ENCODE measurements at regions of chr1 and their contacts with region 1.

Region 1: GRCh38 chr1:8314346-8315280 is 3.3 kb upstream of the SLC45A1 start:
- DNase-seq: peak; percentile 82
- H3K4me3 ChIP-seq: no peak overlapping the region
- H3K27ac ChIP-seq: no peak overlapping the region
- H3K4me1 ChIP-seq: peaks cover 6% of the 10 kb centered on the region
- H3K27me3 ChIP-seq: no peaks in the 10 kb centered on the region
- CTCF ChIP-seq: peak; percentile 88

Region 2: DNA sequence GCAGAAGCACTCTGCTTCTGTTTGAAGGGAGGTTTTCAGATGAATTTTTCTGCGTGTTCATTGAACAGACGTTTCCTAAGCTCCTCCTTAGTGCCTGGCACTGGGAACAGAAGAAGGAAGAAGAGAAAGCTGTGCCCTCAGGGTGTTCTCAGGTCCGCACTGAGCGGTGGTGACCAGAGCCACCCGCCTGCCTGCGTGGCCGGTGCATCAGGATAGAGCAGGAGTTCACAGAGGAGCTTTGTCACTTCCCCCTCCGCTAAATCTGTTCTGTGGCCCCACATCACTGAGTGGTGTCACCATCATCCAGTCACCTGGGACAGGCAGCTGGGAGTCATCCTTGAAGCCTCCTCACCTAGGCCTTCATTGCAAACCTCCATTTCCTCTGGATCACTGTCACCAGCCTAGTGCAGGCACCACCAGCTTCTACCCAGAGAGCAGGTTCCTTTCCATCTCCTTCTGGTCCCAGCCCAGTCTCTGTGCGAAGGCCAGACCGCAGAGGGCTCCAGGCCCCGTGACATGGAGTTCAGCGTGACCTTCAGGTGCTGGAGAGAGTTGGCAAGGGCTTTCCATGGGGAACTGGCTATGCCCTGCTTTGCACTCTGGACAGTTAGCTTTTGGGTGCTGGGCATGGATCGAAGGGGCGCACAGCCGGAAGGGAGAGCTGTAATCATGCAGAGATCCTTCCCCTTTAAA is 331.4 kb before region 1 on chr1:
- CTCF ChIA-PET with region 1: interaction called, 3 read pairs
- POLR2A ChIA-PET with region 1: no interaction called
- intact Hi-C with region 1: loop called (anchors 1 kb)
- DNase-seq: no peak
- H3K4me3 ChIP-seq: no peak overlapping the region
- H3K27ac ChIP-seq: no peak overlapping the region
- H3K4me1 ChIP-seq: no peaks in the 10 kb centered on the region
- H3K27me3 ChIP-seq: no peaks in the 10 kb centered on the region
- CTCF ChIP-seq: no peak

Region 3: DNA sequence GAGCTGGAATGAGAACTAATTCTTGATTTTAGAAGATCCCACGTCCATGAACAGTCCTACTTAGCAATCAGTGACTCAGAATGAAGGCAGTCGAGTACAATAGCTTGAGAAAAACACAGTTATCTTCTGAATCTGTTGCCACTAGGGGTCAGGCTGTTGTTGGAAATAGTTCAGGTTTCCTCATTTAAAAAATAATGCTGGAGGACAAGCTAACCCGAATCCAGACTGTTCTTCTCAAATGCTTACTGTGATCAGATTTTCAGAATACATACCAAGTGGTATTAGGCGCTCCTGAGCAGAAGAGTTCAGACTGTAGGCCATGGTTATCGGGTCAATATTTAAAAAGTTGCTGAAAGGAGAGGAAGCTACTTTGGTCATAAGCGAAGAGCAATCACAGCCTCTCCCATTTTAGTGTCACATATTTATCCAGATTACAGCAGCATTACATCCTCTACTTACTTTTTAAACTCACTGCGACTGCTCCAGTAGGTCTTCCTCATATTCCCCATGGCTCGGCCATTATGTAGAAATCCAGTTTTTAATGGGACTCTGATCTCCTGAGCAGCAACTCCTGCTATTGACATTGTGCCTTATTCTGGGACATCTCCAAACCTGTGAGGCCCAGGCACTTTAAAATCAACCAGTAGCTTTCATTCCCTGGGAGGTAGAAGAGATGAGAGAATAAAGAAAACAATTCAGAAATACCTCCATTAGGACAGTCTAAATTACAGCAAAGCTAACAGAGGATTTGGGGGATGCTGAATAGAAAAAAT is 299.4 kb before region 1 on chr1:
- CTCF ChIA-PET with region 1: interaction called, 50 read pairs
- POLR2A ChIA-PET with region 1: no interaction called
- intact Hi-C with region 1: loop called (anchors 1 kb)
- DNase-seq: peak; percentile 90
- H3K4me3 ChIP-seq: no peak overlapping the region
- H3K27ac ChIP-seq: peak overlapping the region; percentile 43
- H3K4me1 ChIP-seq: peaks cover 56% of the 10 kb centered on the region
- H3K27me3 ChIP-seq: no peaks in the 10 kb centered on the region
- CTCF ChIP-seq: peak; percentile 78

Region 4: DNA sequence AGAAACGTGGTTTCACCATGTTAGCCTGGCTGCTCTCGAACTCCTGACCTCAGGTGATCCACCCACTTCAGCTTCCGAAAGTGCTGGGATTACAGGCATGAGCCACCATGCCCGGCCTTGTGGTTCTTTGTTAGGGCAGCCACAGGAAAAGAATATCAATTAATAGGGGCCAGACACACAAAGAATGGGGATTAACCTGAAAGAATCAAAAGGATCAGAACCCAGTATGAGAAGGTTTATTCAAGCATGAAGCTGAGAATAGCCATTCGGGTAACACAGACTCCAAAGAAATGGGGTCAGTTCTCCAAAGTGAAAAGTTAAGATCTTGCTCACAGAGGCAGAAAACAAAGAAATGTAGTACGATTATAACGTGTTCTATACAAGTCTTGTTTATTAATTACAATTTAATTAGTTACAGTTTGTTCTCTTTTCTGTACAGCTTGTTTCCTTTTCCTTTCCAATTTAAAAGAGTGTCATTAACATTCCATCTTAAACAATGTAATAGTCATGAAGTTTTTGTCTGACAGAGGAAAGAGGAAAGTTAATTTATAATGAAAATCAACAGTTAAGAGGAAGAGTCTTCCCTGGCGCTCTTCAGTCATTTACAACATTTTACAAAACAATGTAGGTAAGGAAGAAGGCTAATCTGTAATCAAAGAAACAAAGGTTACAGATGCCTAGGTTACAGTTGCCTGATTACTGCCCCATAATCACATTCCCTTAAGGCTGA is 48.0 kb before region 1 on chr1:
- CTCF ChIA-PET with region 1: no interaction called
- POLR2A ChIA-PET with region 1: interaction called, 15 read pairs
- intact Hi-C with region 1: no loop called
- DNase-seq: no peak
- H3K4me3 ChIP-seq: no peak overlapping the region
- H3K27ac ChIP-seq: no peak overlapping the region
- H3K4me1 ChIP-seq: peaks cover 11% of the 10 kb centered on the region
- H3K27me3 ChIP-seq: no peaks in the 10 kb centered on the region
- CTCF ChIP-seq: no peak

Measured in A673 (cell line).